Sigmoid colon (tissue), 7 donors: ENCODE measurements at regions of chr20 and their contacts with region 1.

Region 1: GRCh38 chr20:5126512-5127203 is at the start of gene CDS2:
- DNase-seq: peak; percentile 100
- H3K4me3 ChIP-seq: peak within 1 kb of the TSS; percentile 73 to 97 (median 88)
- H3K27ac ChIP-seq: peak within 1 kb of the TSS; percentile 97 to 99 (median 98)
- H3K4me1 ChIP-seq: peaks cover 0 to 39% (median 32%) of the 10 kb centered on the region in 4 donors
- H3K27me3 ChIP-seq: no peaks in the 10 kb centered on the region
- CTCF ChIP-seq: peak in 2 of 4 experiments; percentile 35 to 49
- EP300 ChIP-seq: peak in 1 of 4 donors; percentile 3
- POLR2A ChIP-seq: peak; percentile 26 to 61
- total RNA-seq, gene CDS2: 30.0 to 49.0 (median 36.8) TPM

Region 2: DNA sequence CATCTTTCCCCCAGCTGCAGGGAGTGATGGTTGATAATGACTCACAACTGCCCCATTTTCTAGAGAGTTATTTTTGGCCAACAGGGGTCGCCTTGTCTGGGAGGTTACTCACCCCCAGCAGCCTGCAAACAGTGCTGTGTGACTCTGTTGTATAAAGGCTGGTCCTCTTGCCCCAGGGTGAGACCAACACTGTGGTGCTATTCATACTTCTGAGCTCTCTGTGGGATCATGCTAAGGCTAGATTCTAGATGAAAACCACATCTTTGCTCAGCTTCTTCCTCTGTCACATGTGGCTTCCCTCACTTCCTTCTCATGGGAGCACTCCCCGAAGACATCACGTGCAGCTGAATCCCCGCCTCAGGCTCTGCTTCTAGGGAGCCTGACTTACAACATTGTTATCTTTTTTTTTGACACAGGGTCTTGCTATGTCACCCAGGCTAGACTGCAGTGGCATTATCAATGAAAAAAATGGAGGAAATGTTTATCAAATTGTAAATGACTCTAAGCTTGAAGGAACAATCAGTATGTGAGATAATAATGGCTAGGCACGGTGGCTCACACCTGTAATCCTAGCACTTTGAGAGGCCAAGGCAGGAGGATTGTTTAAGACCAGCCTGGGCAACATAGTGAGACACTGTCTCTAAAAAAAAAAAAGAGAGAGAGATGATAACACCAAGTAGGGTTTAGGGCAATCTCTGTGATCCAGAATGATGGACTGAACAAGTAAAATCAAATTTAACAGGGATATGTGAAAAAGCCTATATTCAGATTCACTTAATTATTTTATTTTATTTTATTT is 69.7 kb before region 1 on chr20:
- intact Hi-C with region 1: no loop called
- DNase-seq: no peak
- H3K4me3 ChIP-seq: no peak overlapping the region
- H3K27ac ChIP-seq: peak overlapping the region in 1 of 4 donors; percentile 6
- H3K4me1 ChIP-seq: no peaks in the 10 kb centered on the region
- H3K27me3 ChIP-seq: no peaks in the 10 kb centered on the region
- CTCF ChIP-seq: no peak
- EP300 ChIP-seq: no peak
- POLR2A ChIP-seq: no peak

Region 3: DNA sequence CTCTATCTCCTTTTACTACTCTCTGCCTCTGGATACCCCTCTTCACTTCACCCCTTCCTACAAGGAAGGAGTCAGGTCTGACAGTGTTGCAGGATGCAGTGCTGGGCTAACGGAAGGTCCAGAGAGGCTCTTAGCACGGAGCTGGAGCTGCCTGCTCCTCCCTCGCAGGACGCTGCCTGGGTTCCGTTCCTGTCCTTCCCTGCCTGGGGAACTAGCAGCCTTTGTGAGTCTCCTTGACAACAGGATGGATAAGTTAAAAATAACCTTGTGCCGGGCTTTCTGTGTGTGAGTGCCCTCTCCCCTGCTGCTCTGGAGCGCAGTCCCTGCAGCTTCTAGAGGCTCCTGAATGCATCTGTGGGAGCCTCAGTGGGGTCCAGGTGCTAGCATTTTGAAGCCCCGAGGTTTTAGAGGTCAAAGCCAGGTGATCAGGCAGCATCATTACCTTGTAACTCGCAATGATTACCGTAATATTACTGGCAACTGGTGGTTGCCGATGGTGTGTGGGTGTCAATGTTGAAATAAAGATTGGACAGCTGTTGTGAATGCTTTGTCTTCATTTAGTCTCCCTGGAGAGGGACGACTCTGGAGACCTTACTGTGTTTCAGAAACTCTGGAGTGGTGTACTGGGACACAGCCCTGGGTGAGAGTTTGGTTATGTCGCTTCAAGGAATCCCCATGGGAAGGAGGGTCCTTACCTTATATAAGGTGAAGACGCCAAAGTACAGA is 44.6 kb after region 1 on chr20:
- intact Hi-C with region 1: loop called (anchors 5 kb)
- DNase-seq: no peak
- H3K4me3 ChIP-seq: no peak overlapping the region
- H3K27ac ChIP-seq: peak overlapping the region in 2 of 4 donors; percentile 38 to 68
- H3K4me1 ChIP-seq: peaks cover 0 to 63% (median 48%) of the 10 kb centered on the region in 4 donors
- H3K27me3 ChIP-seq: no peaks in the 10 kb centered on the region
- CTCF ChIP-seq: no peak
- EP300 ChIP-seq: no peak
- POLR2A ChIP-seq: no peak

Region 4: GRCh38 chr20:5191829-5192569 is 65.3 kb after region 1 on chr20:
- intact Hi-C with region 1: loop called (anchors 1 kb)
- DNase-seq: no peak
- H3K4me3 ChIP-seq: no peak overlapping the region
- H3K27ac ChIP-seq: peak overlapping the region; percentile 59 to 74 (median 60)
- H3K4me1 ChIP-seq: peaks cover 0 to 9% (median 5%) of the 10 kb centered on the region in 4 donors
- H3K27me3 ChIP-seq: no peaks in the 10 kb centered on the region
- CTCF ChIP-seq: peak; percentile 25 to 84 (median 74)
- EP300 ChIP-seq: no peak
- POLR2A ChIP-seq: no peak

Region 5: DNA sequence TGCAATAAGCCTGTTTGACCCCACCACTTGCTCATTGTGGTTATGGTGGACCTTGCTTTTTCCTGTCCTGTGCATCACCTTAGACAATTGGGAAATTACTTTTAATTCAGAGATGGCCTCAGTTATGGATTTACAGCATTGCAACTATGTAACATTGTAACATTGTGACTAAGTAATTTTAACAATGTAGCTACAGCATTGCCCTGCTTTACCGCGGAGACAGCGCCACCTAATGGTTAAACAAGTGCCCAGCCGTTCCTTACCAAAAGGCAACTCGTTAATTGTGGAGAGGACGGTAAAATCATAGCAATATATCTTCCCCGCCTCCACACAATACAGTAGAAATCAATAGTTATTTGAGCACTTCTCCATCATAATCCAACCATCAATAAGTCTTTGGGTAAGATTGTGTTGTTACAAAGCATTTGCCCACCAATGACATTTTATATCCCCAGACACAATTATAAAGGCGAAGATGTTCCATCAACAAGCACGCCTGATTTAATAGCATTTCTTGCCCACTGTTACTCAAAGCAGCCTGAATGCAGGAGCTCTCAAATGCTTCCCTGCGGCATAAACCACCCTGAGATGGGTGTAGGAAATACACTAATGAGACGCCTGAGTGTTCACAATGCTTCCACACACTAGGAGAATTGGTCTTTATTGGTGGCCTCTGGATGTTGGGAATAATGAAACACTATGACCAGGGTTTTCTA is 96.4 kb after region 1 on chr20:
- intact Hi-C with region 1: no loop called
- DNase-seq: no peak
- H3K4me3 ChIP-seq: no peak overlapping the region
- H3K27ac ChIP-seq: no peak overlapping the region
- H3K4me1 ChIP-seq: no peaks in the 10 kb centered on the region
- H3K27me3 ChIP-seq: no peaks in the 10 kb centered on the region
- CTCF ChIP-seq: peak; percentile 16 to 64 (median 40)
- EP300 ChIP-seq: no peak
- POLR2A ChIP-seq: no peak

Region 6: DNA sequence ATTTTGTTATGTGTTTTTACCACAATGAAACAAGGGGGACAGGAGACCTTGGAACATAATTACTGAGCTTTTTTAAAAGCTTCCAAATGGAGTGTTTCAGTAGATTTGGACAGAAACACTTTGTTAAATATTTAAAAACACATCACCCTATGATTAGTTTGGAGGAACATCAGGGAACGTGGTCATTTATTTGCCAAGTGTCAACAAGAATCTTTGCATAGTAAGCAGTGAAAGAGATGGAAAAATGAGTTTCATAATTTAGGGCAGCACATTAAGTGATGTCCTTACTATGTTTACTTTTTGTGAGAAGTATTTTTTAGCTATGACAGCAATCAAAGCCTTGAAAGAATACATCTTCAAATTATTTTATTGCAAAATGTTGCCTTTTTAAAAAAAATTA is 107.5 kb after region 1 on chr20:
- intact Hi-C with region 1: no loop called
- DNase-seq: no peak
- H3K4me3 ChIP-seq: no peak overlapping the region
- H3K27ac ChIP-seq: no peak overlapping the region
- H3K4me1 ChIP-seq: no peaks in the 10 kb centered on the region
- H3K27me3 ChIP-seq: no peaks in the 10 kb centered on the region
- CTCF ChIP-seq: no peak
- EP300 ChIP-seq: no peak
- POLR2A ChIP-seq: no peak